ENCODE measurements at regions of chr1 and their contacts with region 1.

Region 1: GRCh38 chr1:231357831-231358354 is 19.8 kb downstream of the SPRTN start:
- DNase-seq: peak; percentile 57
- H3K4me3 ChIP-seq: no peak overlapping the region; a peak in 1 of 4 replicates
- H3K27ac ChIP-seq: peak overlapping the region in 1 of 2 experiments; percentile 25; a peak in 1 of 4 replicates
- H3K4me1 ChIP-seq: peaks cover 0 to 2% of the 10 kb centered on the region in 2 experiments; a peak in 1 of 4 replicates
- H3K27me3 ChIP-seq: no peaks in the 10 kb centered on the region
- CTCF ChIP-seq: peak; percentile 85
- EP300 ChIP-seq: no peak
- RAD21 ChIP-seq: peak; percentile 99

Region 2: GRCh38 chr1:231093156-231093922 is 264.6 kb before region 1 on chr1:
- CTCF ChIA-PET with region 1: no interaction called
- POLR2A ChIA-PET with region 1: no interaction called
- DNase-seq: no peak
- H3K4me3 ChIP-seq: no peak overlapping the region
- H3K27ac ChIP-seq: no peak overlapping the region
- H3K4me1 ChIP-seq: no peaks in the 10 kb centered on the region
- H3K27me3 ChIP-seq: no peaks in the 10 kb centered on the region; the same call in 1 of the 2 replicates
- CTCF ChIP-seq: peak; percentile 15; the same call in 1 of the 2 replicates
- EP300 ChIP-seq: no peak
- RAD21 ChIP-seq: 0 out of 2 replicates have a peak, but pooled peaks have one; percentile 12

Region 3: DNA sequence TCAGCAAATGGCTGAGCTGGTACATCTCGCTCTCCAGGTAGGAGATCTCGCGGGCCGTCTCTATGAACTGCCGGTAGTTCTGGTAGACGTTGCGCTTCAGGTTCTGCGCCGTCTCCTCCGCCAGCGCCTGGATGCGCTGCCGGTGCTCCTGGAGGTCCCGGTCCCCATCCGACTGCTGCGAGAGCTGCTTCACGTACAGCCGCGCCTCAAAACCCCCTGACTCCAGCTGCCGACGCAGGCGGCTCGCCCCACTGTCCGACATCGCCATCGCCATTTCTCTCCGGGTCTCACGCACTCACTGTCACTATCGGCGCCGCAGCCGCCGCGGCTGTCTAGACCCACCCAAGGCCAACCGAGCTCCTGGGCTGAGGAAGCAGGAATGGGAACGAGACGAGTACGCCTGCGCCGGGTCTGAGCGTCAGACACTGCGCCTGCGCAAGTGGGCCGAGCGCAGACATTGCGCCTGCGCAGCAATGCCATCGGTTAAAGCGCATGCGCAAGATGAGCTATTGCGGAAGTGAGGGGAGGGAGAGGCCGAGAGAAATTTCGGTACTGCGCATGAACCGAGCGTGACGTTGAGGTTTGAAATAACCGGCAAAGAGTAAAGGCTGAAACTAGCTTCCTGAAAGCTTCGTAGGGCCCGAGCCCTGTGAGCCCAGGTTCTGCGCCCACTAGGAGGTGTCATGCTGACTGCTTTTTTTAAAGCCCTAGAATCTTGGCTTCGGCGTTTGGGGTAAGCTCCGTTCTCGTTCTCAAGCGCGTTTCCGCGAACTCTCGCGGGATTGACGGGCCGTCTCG is 20.2 kb before region 1 on chr1 and contains the start of gene EXOC8:
- CTCF ChIA-PET with region 1: interaction called, 10 read pairs
- POLR2A ChIA-PET with region 1: no interaction called
- DNase-seq: peak; percentile 96
- H3K4me3 ChIP-seq: peak within 1 kb of the TSS; percentile 87 to 98
- H3K27ac ChIP-seq: peak within 1 kb of the TSS; percentile 99
- H3K4me1 ChIP-seq: peaks cover 13 to 44% of the 10 kb centered on the region in 2 experiments; a peak in 3 of 4 replicates
- H3K27me3 ChIP-seq: no peaks in the 10 kb centered on the region
- CTCF ChIP-seq: peak; percentile 8; the same call in 1 of the 2 replicates
- EP300 ChIP-seq: no peak
- RAD21 ChIP-seq: no peak
- polyA plus RNA-seq, gene EXOC8: 2.1 and 2.5 TPM in 2 replicates

Region 4: DNA sequence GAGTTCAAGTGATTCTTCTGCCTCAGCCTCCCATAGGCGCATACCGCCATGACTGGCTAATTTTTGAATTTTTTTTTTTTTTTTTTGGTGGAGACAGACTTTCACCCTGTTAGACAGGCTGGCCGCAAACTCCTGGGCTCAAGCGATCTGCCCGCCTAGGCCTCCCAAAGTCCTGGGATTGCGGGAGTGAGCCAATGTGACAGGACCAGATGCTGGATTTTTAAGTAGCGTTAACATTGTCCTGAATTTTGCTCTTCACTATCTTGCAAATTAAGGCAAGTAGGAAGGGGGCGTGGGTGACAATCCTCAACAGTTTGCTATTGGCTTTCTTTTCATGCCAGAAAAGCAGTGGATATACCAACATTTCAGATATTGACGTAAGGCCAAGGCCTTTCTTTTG is 120.9 kb after region 1 on chr1:
- CTCF ChIA-PET with region 1: no interaction called
- POLR2A ChIA-PET with region 1: no interaction called
- DNase-seq: no peak
- H3K4me3 ChIP-seq: no peak overlapping the region
- H3K27ac ChIP-seq: no peak overlapping the region
- H3K4me1 ChIP-seq: no peaks in the 10 kb centered on the region
- H3K27me3 ChIP-seq: no peaks in the 10 kb centered on the region
- CTCF ChIP-seq: no peak
- EP300 ChIP-seq: no peak
- RAD21 ChIP-seq: no peak

Region 5: DNA sequence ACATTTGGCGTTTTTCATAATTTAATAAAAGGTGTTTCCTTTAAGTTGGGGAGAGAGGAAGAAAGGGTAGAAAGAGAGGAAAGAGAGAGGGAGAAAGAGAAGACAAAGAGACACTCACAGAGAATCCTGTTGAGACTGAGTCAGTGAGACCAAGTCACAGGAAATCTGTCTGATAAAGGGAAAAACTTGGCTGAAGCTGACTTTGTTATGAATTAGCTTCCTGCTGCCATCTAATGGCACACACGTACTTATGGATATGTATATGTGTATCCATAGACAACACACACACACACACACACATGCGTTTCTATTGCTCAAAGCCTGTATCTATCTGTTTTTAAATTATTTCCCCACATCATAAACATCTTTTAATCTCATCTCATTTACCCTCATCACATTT is 226.2 kb after region 1 on chr1:
- CTCF ChIA-PET with region 1: interaction called, 12 read pairs
- POLR2A ChIA-PET with region 1: no interaction called
- DNase-seq: peak; percentile 37
- H3K4me3 ChIP-seq: no peak overlapping the region
- H3K27ac ChIP-seq: peak overlapping the region in 1 of 2 experiments; percentile 58; a peak in 2 of 4 replicates
- H3K4me1 ChIP-seq: peaks cover 0 to 3% of the 10 kb centered on the region in 2 experiments; a peak in 2 of 4 replicates
- H3K27me3 ChIP-seq: no peaks in the 10 kb centered on the region
- CTCF ChIP-seq: peak; percentile 53
- EP300 ChIP-seq: no peak
- RAD21 ChIP-seq: peak; percentile 74

Region 6: DNA sequence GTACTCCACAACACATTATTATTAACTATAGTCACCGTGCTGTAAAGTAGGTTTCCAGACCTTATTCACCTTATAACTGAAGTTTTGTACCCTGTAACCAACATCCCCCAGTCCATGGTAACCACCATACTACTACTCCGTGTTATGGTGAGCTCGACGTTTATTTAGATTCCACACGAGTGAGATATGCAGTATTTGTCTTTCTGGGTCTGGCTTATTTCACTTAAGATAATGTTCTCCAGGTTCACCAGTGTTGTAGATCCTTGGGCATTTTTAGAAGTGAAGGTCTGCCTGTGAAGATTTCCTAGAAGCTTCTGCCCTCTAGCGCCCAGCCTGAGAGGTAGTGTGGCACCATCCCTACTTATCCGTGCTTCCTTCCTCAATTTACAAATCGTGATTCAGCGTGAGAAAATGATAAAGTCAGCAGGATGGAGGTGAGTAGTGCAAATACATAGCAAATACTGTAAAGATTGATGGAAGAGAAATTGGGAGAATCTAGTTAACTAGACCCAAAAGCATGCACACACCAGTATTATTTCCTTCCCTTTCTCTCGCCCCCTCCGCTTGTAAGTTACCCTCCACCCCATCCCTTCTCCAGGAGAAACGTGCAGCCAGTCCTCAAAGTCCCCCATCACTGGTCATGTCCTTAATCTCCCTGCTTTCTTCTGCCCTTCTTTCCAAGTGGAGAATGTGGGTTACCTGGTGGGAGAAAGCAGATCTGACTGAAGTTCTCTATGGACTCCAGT is 232.7 kb after region 1 on chr1:
- CTCF ChIA-PET with region 1: interaction called, 11 read pairs
- POLR2A ChIA-PET with region 1: no interaction called
- DNase-seq: peak; percentile 60
- H3K4me3 ChIP-seq: no peak overlapping the region; a peak in 1 of 4 replicates
- H3K27ac ChIP-seq: peak overlapping the region in 1 of 2 experiments; percentile 21; a peak in 1 of 4 replicates
- H3K4me1 ChIP-seq: peaks cover 0 to 2% of the 10 kb centered on the region in 2 experiments; a peak in 1 of 4 replicates
- H3K27me3 ChIP-seq: no peaks in the 10 kb centered on the region
- CTCF ChIP-seq: peak; percentile 84
- EP300 ChIP-seq: no peak
- RAD21 ChIP-seq: peak; percentile 86

Region 7: DNA sequence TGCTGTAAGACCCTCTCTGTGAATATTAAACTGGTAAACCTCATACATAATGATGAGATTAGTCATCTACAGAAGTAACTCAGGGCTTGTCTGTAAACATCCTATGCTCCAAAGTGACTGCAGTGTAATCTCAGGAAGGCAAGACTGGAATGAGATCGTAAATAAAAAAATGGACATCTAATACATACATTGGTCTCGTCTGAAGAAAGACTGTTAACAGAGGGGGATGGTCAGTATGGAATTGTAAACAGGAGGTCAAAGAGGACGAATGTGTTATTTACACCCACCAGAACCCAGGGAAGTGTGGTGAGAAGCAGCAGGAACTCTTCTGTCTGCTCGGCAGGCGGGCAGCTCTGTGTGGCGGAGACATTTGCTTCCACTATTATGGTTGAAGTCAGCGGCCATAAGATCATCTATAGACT is 320.1 kb after region 1 on chr1:
- CTCF ChIA-PET with region 1: no interaction called
- POLR2A ChIA-PET with region 1: no interaction called
- DNase-seq: no peak
- H3K4me3 ChIP-seq: no peak overlapping the region; a peak in 1 of 4 replicates
- H3K27ac ChIP-seq: no peak overlapping the region
- H3K4me1 ChIP-seq: peaks cover 0 to 8% of the 10 kb centered on the region in 2 experiments; a peak in 2 of 4 replicates
- H3K27me3 ChIP-seq: no peaks in the 10 kb centered on the region
- CTCF ChIP-seq: no peak
- EP300 ChIP-seq: no peak
- RAD21 ChIP-seq: no peak

Measured in SK-N-SH (cell line).